Naive thymus-derived CD4-positive, alpha-beta T cell (primary cell): ENCODE measurements at regions of chr13 and their contacts with region 1.

Region 1: GRCh38 chr13:32515246-32515645 is 23.3 kb downstream of the N4BP2L2 start:
- DNase-seq: no peak
- ATAC-seq: no peak
- H3K4me3 ChIP-seq: no peak overlapping the region
- H3K4me3 Mint-ChIP-seq: no peak overlapping the region
- H3K27ac ChIP-seq: no peak overlapping the region
- H3K27ac Mint-ChIP-seq: peak overlapping the region in 2 of 9 donors; percentile 32 to 43
- H3K4me1 ChIP-seq: no peaks in the 10 kb centered on the region
- H3K4me1 Mint-ChIP-seq: peaks cover 4 to 20% (median 9%) of the 10 kb centered on the region in 7 donors
- H3K27me3 ChIP-seq: no peaks in the 10 kb centered on the region
- H3K27me3 Mint-ChIP-seq: no peaks in the 10 kb centered on the region

Region 2: GRCh38 chr13:32446773-32447465 is 68.3 kb before region 1 on chr13:
- CTCF ChIA-PET with region 1: no interaction called
- POLR2A ChIA-PET with region 1: no interaction called
- intact Hi-C with region 1: no loop called
- DNase-seq: no peak
- ATAC-seq: no peak
- H3K4me3 ChIP-seq: no peak overlapping the region
- H3K4me3 Mint-ChIP-seq: no peak overlapping the region
- H3K27ac ChIP-seq: no peak overlapping the region
- H3K27ac Mint-ChIP-seq: peak overlapping the region in 4 of 9 donors; percentile 1 to 34 (median 19)
- H3K4me1 ChIP-seq: no peaks in the 10 kb centered on the region
- H3K4me1 Mint-ChIP-seq: peaks cover 0 to 19% (median 5%) of the 10 kb centered on the region in 7 donors
- H3K27me3 ChIP-seq: no peaks in the 10 kb centered on the region
- H3K27me3 Mint-ChIP-seq: no peaks in the 10 kb centered on the region

Region 3: DNA sequence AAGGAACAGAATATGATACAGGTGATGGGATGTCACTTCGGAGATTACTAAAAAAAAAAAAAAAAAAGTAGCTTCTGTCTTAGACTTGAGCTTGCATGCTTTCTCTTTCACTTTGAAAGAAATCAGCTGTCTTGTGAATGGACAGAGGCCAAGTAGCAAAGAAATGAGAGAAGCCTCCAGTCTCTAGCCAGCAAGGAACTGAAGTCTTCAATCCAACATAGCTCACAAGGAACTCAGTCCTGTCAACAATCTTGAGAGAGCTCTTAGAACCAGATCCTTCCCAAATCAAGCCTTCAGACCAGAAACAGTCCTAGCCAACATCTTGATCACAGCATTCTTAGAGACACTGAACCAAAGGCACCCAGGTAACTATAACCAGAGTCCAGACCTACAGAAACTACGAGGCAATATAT is 15.6 kb after region 1 on chr13:
- CTCF ChIA-PET with region 1: no interaction called
- POLR2A ChIA-PET with region 1: no interaction called
- intact Hi-C with region 1: loop called in 1 of 2 experiments (anchors 2 kb)
- DNase-seq: peak in 6 of 9 donors; percentile 7 to 31 (median 24)
- ATAC-seq: peak; percentile 73
- H3K4me3 ChIP-seq: peak overlapping the region; percentile 12
- H3K4me3 Mint-ChIP-seq: peak overlapping the region; percentile 70 to 89 (median 82)
- H3K27ac ChIP-seq: peak overlapping the region; percentile 48
- H3K27ac Mint-ChIP-seq: peak overlapping the region; percentile 16 to 93 (median 81)
- H3K4me1 ChIP-seq: peaks cover 55 to 59% of the 10 kb centered on the region in 2 donors
- H3K4me1 Mint-ChIP-seq: peaks cover 53 to 97% (median 90%) of the 10 kb centered on the region in 7 donors
- H3K27me3 ChIP-seq: no peaks in the 10 kb centered on the region
- H3K27me3 Mint-ChIP-seq: no peaks in the 10 kb centered on the region